GM12878 (cell line): ENCODE measurements at regions of chr5 and their contacts with region 1.

Region 1: GRCh38 chr5:157271740-157272271 is 5.9 kb downstream of the CYFIP2 start:
- DNase-seq: peak; percentile 93
- ATAC-seq: peak; percentile 80
- H3K4me3 ChIP-seq: peak overlapping the region; percentile 60; the same call in 1 of the 2 replicates
- H3K27ac ChIP-seq: peak overlapping the region; percentile 97
- H3K4me1 ChIP-seq: peaks cover 56% of the 10 kb centered on the region
- H3K27me3 ChIP-seq: no peaks in the 10 kb centered on the region
- CTCF ChIP-seq: no peak
- EP300 ChIP-seq: peak; percentile 72 to 75; a peak in 3 of 4 replicates
- POLR2A ChIP-seq: peak; percentile 82
- RAD21 ChIP-seq: no peak

Region 2: DNA sequence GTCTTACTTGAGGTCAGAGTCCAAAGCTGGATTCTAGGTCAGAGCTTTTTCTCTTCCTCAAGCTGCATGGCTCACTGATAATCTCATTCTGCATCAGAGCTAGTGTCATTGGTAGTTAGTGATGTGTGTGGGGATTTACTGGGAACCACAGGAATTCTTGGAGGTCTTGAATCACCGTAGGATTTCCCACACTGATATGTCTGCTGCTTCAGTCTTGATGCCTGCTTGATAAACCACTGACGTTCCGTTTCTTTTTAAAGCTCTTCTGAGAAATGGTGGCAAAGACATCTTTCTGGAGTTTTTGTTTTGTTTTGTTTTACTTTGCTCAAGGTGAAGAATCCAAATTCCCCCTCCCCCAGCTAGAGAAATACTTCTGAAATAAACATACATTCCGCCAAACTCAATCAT is 104.6 kb before region 1 on chr5:
- CTCF ChIA-PET with region 1: interaction called, 3 read pairs
- POLR2A ChIA-PET with region 1: interaction called, 12 read pairs
- RAD21 ChIA-PET with region 1: interaction called, 10 read pairs
- SMC1A ChIA-PET with region 1: interaction called, 21 read pairs
- in situ Hi-C with region 1: no loop called
- intact Hi-C with region 1: no loop called
- DNase-seq: peak; percentile 16
- ATAC-seq: peak; percentile 72
- H3K4me3 ChIP-seq: no peak overlapping the region
- H3K27ac ChIP-seq: no peak overlapping the region
- H3K4me1 ChIP-seq: peaks cover 10% of the 10 kb centered on the region
- H3K27me3 ChIP-seq: no peaks in the 10 kb centered on the region; a peak in 1 of 4 replicates
- CTCF ChIP-seq: no peak
- EP300 ChIP-seq: no peak
- POLR2A ChIP-seq: no peak
- RAD21 ChIP-seq: no peak

Region 3: DNA sequence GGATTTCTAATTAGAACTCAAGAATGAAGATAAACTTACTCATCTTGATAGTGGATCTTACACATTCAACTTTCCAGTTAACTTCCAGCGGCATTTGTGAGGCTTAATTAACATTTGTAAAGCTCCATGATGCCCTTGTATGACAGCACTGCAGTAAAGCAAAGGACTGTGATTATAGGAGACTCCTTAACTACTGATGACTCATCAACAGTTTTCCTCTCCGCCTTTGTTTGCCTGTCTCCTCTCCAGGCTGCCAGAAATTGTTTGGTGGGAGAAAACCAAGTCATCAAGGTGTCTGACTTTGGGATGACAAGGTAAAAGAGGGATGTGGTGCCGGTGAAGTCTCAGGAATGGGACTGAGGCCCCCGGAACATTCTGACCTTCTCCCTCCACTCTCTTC is 26.3 kb before region 1 on chr5:
- CTCF ChIA-PET with region 1: interaction called, 44 read pairs
- POLR2A ChIA-PET with region 1: interaction called, 3 read pairs
- RAD21 ChIA-PET with region 1: interaction called, 99 read pairs
- SMC1A ChIA-PET with region 1: interaction called, 70 read pairs
- in situ Hi-C with region 1: no loop called
- intact Hi-C with region 1: no loop called
- DNase-seq: no peak
- ATAC-seq: no peak
- H3K4me3 ChIP-seq: no peak overlapping the region
- H3K27ac ChIP-seq: no peak overlapping the region
- H3K4me1 ChIP-seq: no peaks in the 10 kb centered on the region
- H3K27me3 ChIP-seq: no peaks in the 10 kb centered on the region
- CTCF ChIP-seq: no peak
- EP300 ChIP-seq: no peak
- POLR2A ChIP-seq: no peak
- RAD21 ChIP-seq: no peak

Region 4: GRCh38 chr5:157312492-157312891 is 40.7 kb after region 1 on chr5:
- CTCF ChIA-PET with region 1: interaction called, 15 read pairs
- POLR2A ChIA-PET with region 1: interaction called, 6 read pairs
- RAD21 ChIA-PET with region 1: interaction called, 11 read pairs
- SMC1A ChIA-PET with region 1: interaction called, 15 read pairs
- in situ Hi-C with region 1: no loop called
- intact Hi-C with region 1: loop called (anchors 5 kb)
- DNase-seq: peak; percentile 59
- ATAC-seq: peak; percentile 96
- H3K4me3 ChIP-seq: no peak overlapping the region
- H3K27ac ChIP-seq: no peak overlapping the region
- H3K4me1 ChIP-seq: no peaks in the 10 kb centered on the region
- H3K27me3 ChIP-seq: no peaks in the 10 kb centered on the region
- CTCF ChIP-seq: peak; percentile 80 to 86 (median 80)
- EP300 ChIP-seq: no peak
- POLR2A ChIP-seq: no peak
- RAD21 ChIP-seq: peak; percentile 72

Region 5: GRCh38 chr5:157511651-157512644 is 240.1 kb after region 1 on chr5:
- CTCF ChIA-PET with region 1: no interaction called
- POLR2A ChIA-PET with region 1: no interaction called
- RAD21 ChIA-PET with region 1: no interaction called
- SMC1A ChIA-PET with region 1: no interaction called
- in situ Hi-C with region 1: no loop called
- intact Hi-C with region 1: no loop called
- DNase-seq: no peak
- ATAC-seq: no peak
- H3K4me3 ChIP-seq: no peak overlapping the region
- H3K27ac ChIP-seq: no peak overlapping the region
- H3K4me1 ChIP-seq: peaks cover 8% of the 10 kb centered on the region; the same call in 1 of the 2 replicates
- H3K27me3 ChIP-seq: no peaks in the 10 kb centered on the region
- CTCF ChIP-seq: no peak
- EP300 ChIP-seq: no peak
- POLR2A ChIP-seq: no peak
- RAD21 ChIP-seq: no peak